H1 (cell line): ENCODE measurements at regions of chr16 and their contacts with region 1.

Region 1: GRCh38 chr16:68704232-68704867 is 32.7 kb upstream of the CDH1 start:
- DNase-seq: peak; percentile 84 to 92
- H3K4me3 ChIP-seq: no peak overlapping the region
- H3K27ac ChIP-seq: no peak overlapping the region
- H3K4me1 ChIP-seq: peaks cover 0 to 10% (median 3%) of the 10 kb centered on the region in 4 experiments; a peak in 4 of 7 replicates
- H3K27me3 ChIP-seq: no peaks in the 10 kb centered on the region
- CTCF ChIP-seq: peak; percentile 87 to 96 (median 96)
- EP300 ChIP-seq: peak in 1 of 2 experiments; percentile 20; a peak in 2 of 3 replicates
- POLR2A ChIP-seq: no peak
- RAD21 ChIP-seq: peak; percentile 98

Region 2: GRCh38 chr16:68607443-68607842 is 96.9 kb before region 1 on chr16:
- CTCF ChIA-PET with region 1: no interaction called
- POLR2A ChIA-PET with region 1: no interaction called
- DNase-seq: no peak
- H3K4me3 ChIP-seq: no peak overlapping the region
- H3K27ac ChIP-seq: no peak overlapping the region
- H3K4me1 ChIP-seq: peaks cover 0 to 3% (median 0%) of the 10 kb centered on the region in 4 experiments; a peak in 2 of 7 replicates
- H3K27me3 ChIP-seq: no peaks in the 10 kb centered on the region
- CTCF ChIP-seq: no peak
- EP300 ChIP-seq: no peak
- POLR2A ChIP-seq: no peak
- RAD21 ChIP-seq: no peak

Region 3: GRCh38 chr16:68737046-68737729 is 32.8 kb after region 1 on chr16 and contains the start of gene CDH1:
- CTCF ChIA-PET with region 1: interaction called, 5 read pairs
- POLR2A ChIA-PET with region 1: interaction called, 65 read pairs
- DNase-seq: peak; percentile 86 to 97
- H3K4me3 ChIP-seq: peak within 1 kb of the TSS; percentile 60 to 90 (median 84)
- H3K27ac ChIP-seq: peak within 1 kb of the TSS; percentile 50
- H3K4me1 ChIP-seq: peaks cover 0 to 7% (median 2%) of the 10 kb centered on the region in 4 experiments; a peak in 3 of 7 replicates
- H3K27me3 ChIP-seq: no peaks in the 10 kb centered on the region
- CTCF ChIP-seq: no peak
- EP300 ChIP-seq: no peak
- POLR2A ChIP-seq: peak; percentile 98 to 99
- RAD21 ChIP-seq: 0 out of 4 replicates have a peak, but pooled peaks of 1 of the 2 experiments have one; percentile 2
- total RNA-seq, gene CDH1: 265 and 319 TPM in 2 replicates

Region 4: DNA sequence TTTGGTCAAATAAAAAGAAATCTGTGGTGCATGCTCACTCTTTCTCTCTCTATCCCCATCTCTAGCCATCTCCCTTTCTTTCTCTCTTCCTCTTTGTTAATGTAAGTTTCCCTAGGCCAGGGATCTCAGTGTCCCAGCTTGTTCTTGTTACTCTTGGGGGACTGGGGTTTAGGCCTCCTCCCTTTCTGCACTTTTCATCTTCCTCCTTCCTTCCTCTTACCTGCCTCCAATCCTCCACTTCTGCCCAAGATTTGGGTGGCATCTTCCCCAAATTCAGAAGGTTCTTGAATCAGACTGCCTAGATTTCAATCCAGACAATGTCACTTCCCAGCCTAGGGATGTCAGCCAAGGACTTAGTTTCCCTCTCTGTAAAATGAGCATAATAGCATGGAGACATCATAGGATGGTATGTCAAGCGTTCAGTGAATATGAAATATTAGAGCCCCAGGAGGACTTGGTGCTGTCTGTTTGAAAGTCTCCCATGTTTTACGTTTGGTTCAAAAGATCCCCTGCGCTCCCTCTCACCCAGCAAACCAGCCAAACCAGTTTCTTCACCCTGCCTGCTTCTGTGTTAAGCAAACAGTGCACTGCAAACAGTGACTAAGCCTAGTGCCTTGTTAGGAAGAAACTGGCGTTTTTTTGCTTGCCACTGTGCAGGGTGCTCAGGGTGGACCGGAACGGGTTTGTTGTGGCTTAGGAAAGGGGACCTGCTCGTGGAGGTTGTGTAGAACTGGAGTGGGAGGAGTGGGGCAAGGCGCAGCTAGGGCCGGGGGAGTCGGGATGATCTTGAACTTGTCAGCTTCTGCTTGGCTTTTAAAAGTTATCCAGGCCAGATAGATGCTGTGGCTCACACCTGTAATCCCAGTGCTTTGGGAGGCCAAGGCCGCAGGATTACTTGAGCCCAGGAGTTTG is 40.3 kb after region 1 on chr16:
- CTCF ChIA-PET with region 1: interaction called, 3 read pairs
- POLR2A ChIA-PET with region 1: interaction called, 65 read pairs
- DNase-seq: peak in 1 of 2 experiments; percentile 63
- H3K4me3 ChIP-seq: peak overlapping the region in 3 of 4 experiments; percentile 5 to 39 (median 7); a peak in 5 of 8 replicates
- H3K27ac ChIP-seq: peak overlapping the region; percentile 63
- H3K4me1 ChIP-seq: peaks cover 8 to 29% (median 18%) of the 10 kb centered on the region in 4 experiments
- H3K27me3 ChIP-seq: no peaks in the 10 kb centered on the region
- CTCF ChIP-seq: no peak
- EP300 ChIP-seq: peak in 1 of 2 experiments; percentile 61; a peak in 1 of 3 replicates
- POLR2A ChIP-seq: no peak
- RAD21 ChIP-seq: 0 out of 4 replicates have a peak, but pooled peaks of 1 of the 2 experiments have one; percentile 18

Region 5: GRCh38 chr16:68806422-68806975 is 102.1 kb after region 1 on chr16:
- CTCF ChIA-PET with region 1: interaction called, 71 read pairs
- POLR2A ChIA-PET with region 1: no interaction called
- DNase-seq: no peak
- H3K4me3 ChIP-seq: no peak overlapping the region
- H3K27ac ChIP-seq: no peak overlapping the region
- H3K4me1 ChIP-seq: no peaks in the 10 kb centered on the region; a peak in 1 of 7 replicates
- H3K27me3 ChIP-seq: no peaks in the 10 kb centered on the region; a peak in 1 of 7 replicates
- CTCF ChIP-seq: no peak
- EP300 ChIP-seq: no peak
- POLR2A ChIP-seq: no peak
- RAD21 ChIP-seq: no peak